GM12878 (cell line): ENCODE measurements at regions of chr9 and their contacts with region 1.

Region 1: DNA sequence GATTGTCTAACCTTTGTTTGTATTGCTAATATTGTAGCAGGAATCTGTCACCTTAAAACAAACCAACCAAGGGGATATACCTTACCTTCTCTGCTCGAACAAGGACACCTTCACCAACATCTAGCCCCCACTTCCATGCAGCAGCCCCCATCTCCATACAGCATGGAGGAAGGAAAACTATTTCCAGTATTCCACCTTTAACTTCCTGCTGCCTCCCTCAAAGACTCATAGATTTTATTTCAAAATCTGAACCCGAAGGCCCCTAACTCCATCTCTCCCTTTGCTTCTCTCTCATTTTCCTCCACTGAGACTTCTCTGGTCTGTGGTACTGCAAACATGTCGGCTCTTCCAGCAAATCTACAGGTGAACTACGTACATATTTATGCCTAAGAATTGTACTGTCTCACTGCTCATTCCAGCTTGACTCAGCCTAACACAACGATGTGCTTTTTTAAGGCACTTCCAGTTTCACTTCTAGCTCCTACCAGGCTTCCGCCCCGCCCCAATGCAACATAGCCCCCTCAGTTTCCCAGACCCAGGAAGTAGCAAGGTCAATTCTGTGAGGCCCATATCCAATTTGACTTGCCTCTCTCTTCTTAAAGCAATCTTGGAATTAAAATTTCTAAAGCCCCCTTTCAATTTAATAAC is 70.7 kb upstream of the RNF38 start:
- DNase-seq: peak; percentile 67
- ATAC-seq: peak; percentile 98
- H3K4me3 ChIP-seq: peak overlapping the region; percentile 66
- H3K27ac ChIP-seq: peak overlapping the region; percentile 91
- H3K4me1 ChIP-seq: peaks cover 15% of the 10 kb centered on the region
- H3K27me3 ChIP-seq: no peaks in the 10 kb centered on the region
- CTCF ChIP-seq: no peak
- EP300 ChIP-seq: 0 out of 4 replicates have a peak, but pooled peaks of 1 of the 2 experiments have one; percentile 11
- POLR2A ChIP-seq: peak; percentile 53
- RAD21 ChIP-seq: no peak

Region 2: DNA sequence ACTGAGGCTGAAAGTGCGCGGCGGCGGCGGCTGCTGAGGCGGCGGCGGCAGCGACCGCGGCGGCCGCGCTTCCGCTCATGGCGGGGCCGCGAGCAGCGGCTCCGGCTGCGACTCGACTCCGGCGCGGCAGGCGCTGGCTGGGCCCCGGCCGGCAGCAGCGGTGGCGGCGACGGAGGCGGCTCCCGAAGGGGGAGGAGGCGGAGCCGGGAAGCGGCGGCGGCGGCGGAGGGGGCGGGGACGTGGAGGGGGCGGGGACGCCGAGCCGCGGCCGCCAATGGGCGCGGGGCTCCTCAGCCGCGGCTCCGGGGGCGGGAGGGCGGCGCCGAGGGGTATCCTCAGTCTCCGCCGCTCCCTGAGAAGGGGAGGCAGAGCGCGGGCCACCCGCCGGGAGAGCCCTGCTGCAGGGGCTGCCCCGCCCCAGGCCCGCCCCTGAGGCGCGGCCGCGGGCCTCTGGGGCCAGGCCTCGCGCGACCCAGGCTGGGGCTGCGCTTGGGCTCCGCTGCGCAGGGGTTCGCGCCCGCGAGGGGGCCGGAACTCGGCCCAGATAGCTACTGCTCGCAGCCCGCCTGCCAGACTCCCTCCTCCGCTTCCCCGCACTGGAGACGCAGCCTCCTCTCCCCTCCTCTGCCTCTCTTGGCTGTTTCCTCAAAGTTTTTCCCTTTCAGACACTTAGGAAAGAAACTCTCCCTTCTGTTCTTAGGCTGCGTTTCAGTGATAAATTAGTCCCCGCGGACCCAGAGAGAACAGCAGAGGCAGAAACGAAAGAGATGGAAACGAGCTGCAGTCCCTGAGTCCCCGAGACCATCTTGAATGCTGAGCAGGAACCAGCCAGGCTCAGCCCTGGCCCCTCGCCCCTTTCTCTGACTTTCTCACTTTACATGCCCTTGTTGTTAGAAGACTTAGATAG is 17.0 kb after region 1 on chr9:
- CTCF ChIA-PET with region 1: interaction called, 15 read pairs
- POLR2A ChIA-PET with region 1: interaction called, 41 read pairs
- RAD21 ChIA-PET with region 1: interaction called, 25 read pairs
- SMC1A ChIA-PET with region 1: interaction called, 45 read pairs
- in situ Hi-C with region 1: no loop called
- intact Hi-C with region 1: no loop called
- DNase-seq: peak; percentile 62
- ATAC-seq: peak; percentile 95
- H3K4me3 ChIP-seq: peak overlapping the region; percentile 76
- H3K27ac ChIP-seq: peak overlapping the region; percentile 99
- H3K4me1 ChIP-seq: peaks cover 11% of the 10 kb centered on the region
- H3K27me3 ChIP-seq: no peaks in the 10 kb centered on the region
- CTCF ChIP-seq: no peak
- EP300 ChIP-seq: no peak
- POLR2A ChIP-seq: peak; percentile 91
- RAD21 ChIP-seq: no peak

Region 3: DNA sequence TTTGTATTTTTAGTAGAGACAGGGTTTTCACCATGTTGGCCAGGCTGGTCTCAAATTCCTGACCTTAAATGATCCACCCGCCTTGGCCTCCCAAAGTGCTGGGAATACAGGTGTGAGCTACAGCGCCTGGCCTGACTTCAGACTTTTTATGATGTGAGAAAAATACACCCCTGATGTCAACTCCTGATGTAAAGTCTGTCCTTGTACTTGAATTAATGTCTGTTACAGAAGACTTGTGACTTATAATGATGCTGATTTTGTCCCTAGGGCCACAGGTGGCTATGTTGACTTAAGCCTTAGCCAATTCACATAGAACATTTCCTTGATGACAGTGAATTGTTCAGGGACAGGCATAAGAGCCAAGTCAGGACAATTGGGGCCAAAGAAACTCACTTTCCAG is 59.5 kb after region 1 on chr9:
- CTCF ChIA-PET with region 1: no interaction called
- POLR2A ChIA-PET with region 1: no interaction called
- RAD21 ChIA-PET with region 1: no interaction called
- SMC1A ChIA-PET with region 1: no interaction called
- in situ Hi-C with region 1: no loop called
- intact Hi-C with region 1: no loop called
- DNase-seq: no peak
- ATAC-seq: no peak
- H3K4me3 ChIP-seq: no peak overlapping the region
- H3K27ac ChIP-seq: no peak overlapping the region
- H3K4me1 ChIP-seq: no peaks in the 10 kb centered on the region
- H3K27me3 ChIP-seq: no peaks in the 10 kb centered on the region
- CTCF ChIP-seq: no peak
- EP300 ChIP-seq: no peak
- POLR2A ChIP-seq: no peak
- RAD21 ChIP-seq: no peak